ENCODE measurements at regions of chr3 and their contacts with region 1.

Region 1: DNA sequence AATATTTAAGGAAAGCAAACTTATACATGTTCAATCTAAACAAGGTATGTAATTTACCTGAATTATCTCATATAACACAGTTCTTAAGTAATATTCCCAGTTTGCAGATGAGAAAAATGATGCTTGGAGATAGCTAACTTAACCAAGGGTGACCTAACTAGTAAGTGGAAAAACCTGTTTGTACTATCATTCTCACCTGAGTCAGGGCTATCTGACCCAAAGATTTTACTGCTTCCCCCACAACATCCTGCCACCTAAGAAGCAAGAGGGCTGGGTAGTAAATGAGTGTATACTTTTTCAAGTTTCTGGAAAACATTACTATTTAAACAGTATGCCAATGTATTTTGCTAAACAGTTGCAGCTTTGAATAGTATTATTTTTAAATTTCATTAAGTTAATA is 10.6 kb downstream of the TP63 start:
- DNase-seq: peak; percentile 42
- H3K27ac ChIP-seq: no peak overlapping the region
- CTCF ChIP-seq: no peak

Region 2: GRCh38 chr3:188489639-188490405 is 1152.0 kb before region 1 on chr3:
- CTCF ChIA-PET with region 1: interaction called, 11 read pairs
- POLR2A ChIA-PET with region 1: no interaction called
- DNase-seq: no peak
- H3K27ac ChIP-seq: no peak overlapping the region
- CTCF ChIP-seq: no peak

Region 3: GRCh38 chr3:189502676-189503257 is 139.0 kb before region 1 on chr3:
- CTCF ChIA-PET with region 1: no interaction called
- POLR2A ChIA-PET with region 1: no interaction called
- DNase-seq: no peak
- H3K27ac ChIP-seq: no peak overlapping the region
- CTCF ChIP-seq: no peak

Region 4: DNA sequence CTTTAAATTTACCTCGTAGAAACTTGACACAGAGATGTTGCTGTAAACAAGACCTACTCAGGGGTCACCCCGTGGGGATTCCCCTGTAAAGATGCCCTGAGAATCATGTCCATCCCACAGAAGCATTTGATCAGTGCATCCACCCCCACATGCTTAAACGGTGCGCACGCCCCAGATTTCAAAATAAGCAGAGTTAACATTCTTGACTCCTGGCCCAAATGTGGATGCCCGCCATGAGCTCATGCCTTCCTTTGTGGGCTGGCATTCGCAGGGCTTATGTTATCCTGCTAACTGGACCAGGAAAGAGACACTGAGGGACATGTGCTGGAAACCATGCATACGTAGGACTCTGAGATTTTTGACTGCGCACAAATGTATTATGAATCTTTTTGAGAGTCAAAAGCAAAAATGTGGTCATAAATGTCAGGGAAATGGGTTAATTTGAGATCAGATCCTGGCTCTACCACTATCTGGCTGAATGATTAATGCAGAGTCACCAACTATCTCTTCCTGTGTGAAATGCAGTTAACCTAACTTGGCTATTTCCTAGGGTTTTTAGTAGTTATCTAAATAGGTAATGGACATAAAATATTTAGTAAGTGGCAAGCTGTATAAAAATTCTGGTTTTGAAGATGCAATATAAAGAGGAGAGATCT is 19.7 kb before region 1 on chr3:
- CTCF ChIA-PET with region 1: no interaction called
- POLR2A ChIA-PET with region 1: no interaction called
- DNase-seq: no peak
- H3K27ac ChIP-seq: no peak overlapping the region
- CTCF ChIP-seq: no peak

Measured in RWPE1 (cell line).